ENCODE measurements at regions of chr11 and their contacts with region 1.

Region 1: GRCh38 chr11:9506489-9507276 is 45.9 kb downstream of the ZNF143 start:
- DNase-seq: peak; percentile 79 to 86
- H3K4me3 ChIP-seq: peak overlapping the region in 1 of 4 experiments; percentile 37; a peak in 2 of 8 replicates
- H3K27ac ChIP-seq: no peak overlapping the region; the same call in 1 of the 2 replicates
- H3K4me1 ChIP-seq: peaks cover 0 to 6% (median 3%) of the 10 kb centered on the region in 4 experiments; a peak in 5 of 7 replicates
- H3K27me3 ChIP-seq: no peaks in the 10 kb centered on the region
- CTCF ChIP-seq: peak; percentile 24 to 94 (median 82)
- EP300 ChIP-seq: no peak
- POLR2A ChIP-seq: no peak
- RAD21 ChIP-seq: peak; percentile 92 to 93

Region 2: GRCh38 chr11:9489080-9489765 is 17.5 kb before region 1 on chr11:
- CTCF ChIA-PET with region 1: interaction called, 21 read pairs
- POLR2A ChIA-PET with region 1: no interaction called
- DNase-seq: no peak
- H3K4me3 ChIP-seq: no peak overlapping the region
- H3K27ac ChIP-seq: no peak overlapping the region
- H3K4me1 ChIP-seq: no peaks in the 10 kb centered on the region
- H3K27me3 ChIP-seq: no peaks in the 10 kb centered on the region
- CTCF ChIP-seq: no peak
- EP300 ChIP-seq: no peak
- POLR2A ChIP-seq: no peak
- RAD21 ChIP-seq: no peak

Region 3: GRCh38 chr11:9643751-9644150 is 137.1 kb after region 1 on chr11:
- CTCF ChIA-PET with region 1: no interaction called
- POLR2A ChIA-PET with region 1: no interaction called
- DNase-seq: no peak
- H3K4me3 ChIP-seq: no peak overlapping the region
- H3K27ac ChIP-seq: no peak overlapping the region
- H3K4me1 ChIP-seq: peaks cover 0 to 2% (median 0%) of the 10 kb centered on the region in 4 experiments; a peak in 1 of 7 replicates
- H3K27me3 ChIP-seq: no peaks in the 10 kb centered on the region
- CTCF ChIP-seq: no peak
- EP300 ChIP-seq: no peak
- POLR2A ChIP-seq: no peak
- RAD21 ChIP-seq: no peak